HCT116 (cell line): ENCODE measurements at regions of chr3 and their contacts with region 1.

Region 1: DNA sequence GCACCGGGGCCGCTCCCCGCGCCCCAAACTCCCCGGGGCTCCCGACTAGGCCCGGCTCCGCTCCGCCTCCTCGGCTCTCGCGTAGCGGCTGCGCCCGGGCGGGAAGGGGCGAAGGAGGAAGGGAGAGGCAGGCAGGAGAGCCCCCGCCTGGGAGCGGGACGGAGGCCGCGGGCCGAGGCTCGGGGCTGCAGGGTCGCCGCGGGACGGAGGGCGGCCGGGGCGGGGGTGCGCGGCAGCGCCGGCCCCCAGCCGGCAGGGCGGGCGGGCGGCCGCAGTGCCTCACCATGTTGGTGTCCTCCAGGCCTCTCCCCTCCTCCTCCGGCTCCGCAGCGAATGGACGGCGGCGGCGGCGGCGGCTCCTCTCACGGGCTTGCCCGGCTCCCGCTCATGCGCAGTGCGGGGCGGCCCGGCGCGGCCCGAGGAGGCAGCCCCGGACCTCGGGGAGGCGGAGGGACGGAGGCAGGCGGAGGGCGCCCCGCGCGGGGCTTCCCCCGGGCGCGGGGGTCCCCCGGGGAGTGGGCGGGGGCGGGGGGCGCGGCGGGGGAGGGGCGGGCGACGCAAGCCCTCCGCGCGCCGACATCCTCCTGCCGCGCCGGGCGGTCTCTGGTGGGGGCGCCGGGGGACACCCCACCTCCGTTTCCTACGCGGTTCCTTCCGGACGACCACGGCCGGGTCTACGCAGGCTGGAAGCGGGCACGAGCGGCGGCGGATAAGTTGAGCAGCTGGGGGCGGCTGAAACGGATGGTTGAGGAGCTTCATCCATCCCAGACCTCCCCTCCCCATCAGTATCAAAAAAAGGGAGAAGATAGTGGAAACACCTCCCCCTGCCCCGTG is at the start of gene DCUN1D1:
- DNase-seq: peak; percentile 36
- ATAC-seq: peak; percentile 94
- H3K4me3 ChIP-seq: peak within 1 kb of the TSS; percentile 79 to 87
- H3K27ac ChIP-seq: peak within 1 kb of the TSS; percentile 64; the same call in 1 of the 2 replicates
- H3K4me1 ChIP-seq: peaks cover 2 to 18% of the 10 kb centered on the region in 2 experiments; a peak in 3 of 4 replicates
- H3K27me3 ChIP-seq: no peaks in the 10 kb centered on the region
- CTCF ChIP-seq: no peak
- POLR2A ChIP-seq: peak; percentile 43
- RAD21 ChIP-seq: no peak
- total RNA-seq, gene DCUN1D1: 46.9 TPM

Region 2: DNA sequence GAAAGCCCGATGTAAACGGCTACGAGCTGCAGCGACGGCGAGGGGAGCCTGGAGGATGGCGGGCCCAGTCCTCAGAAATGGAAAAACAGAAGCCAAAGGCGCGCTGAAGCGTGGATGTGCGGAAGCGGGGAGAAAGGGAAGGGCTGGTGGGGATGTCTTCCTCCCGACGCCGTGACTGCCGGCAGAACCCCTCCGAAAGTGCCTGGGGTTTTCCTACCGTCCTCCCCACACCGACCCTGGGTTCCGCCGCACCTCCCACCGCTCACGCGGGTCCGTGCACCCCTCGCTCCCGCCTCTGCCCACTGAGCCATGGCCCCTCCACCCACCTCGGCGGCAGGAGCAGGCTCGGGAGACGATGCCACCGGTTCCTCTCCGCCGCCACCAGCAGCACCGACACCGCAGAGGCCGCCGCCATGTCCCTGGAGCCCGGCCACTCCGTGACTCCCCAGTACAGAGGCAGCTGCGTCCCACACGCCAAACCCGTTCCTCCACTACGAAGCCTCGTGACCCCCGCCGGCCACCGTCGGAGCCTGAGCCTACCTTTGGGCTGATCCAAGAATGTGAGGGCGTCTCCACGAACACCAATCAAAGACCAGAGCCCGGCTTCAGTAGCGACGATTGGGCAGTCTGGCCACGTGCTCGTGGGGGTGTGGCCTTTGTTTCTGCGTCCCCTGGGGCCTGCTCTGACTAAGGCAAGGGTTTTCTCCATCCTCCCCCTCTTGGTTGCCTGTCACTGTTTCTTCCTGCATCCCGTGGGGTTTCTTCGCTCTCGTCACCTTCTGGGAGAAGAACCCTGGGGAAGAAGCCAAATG is 118.8 kb after region 1 on chr3 and contains the start of gene MCCC1:
- CTCF ChIA-PET with region 1: no interaction called
- POLR2A ChIA-PET with region 1: no interaction called
- RAD21 ChIA-PET with region 1: no interaction called
- intact Hi-C with region 1: loop called (anchors 10 kb)
- DNase-seq: peak; percentile 98
- ATAC-seq: peak; percentile 100
- H3K4me3 ChIP-seq: peak within 1 kb of the TSS; percentile 88 to 89
- H3K27ac ChIP-seq: peak within 1 kb of the TSS; percentile 57
- H3K4me1 ChIP-seq: peaks cover 15 to 23% of the 10 kb centered on the region in 2 experiments; a peak in 3 of 4 replicates
- H3K27me3 ChIP-seq: no peaks in the 10 kb centered on the region
- CTCF ChIP-seq: no peak
- POLR2A ChIP-seq: peak; percentile 45
- RAD21 ChIP-seq: no peak
- total RNA-seq, gene MCCC1: 12.6 TPM